Caco-2 (cell line): ENCODE measurements at regions of chr1 and their contacts with region 1.

Region 1: GRCh38 chr1:25796811-25797458 is 3.1 kb upstream of the SELENON start:
- DNase-seq: peak; percentile 79 to 83
- H3K4me3 ChIP-seq: no peak overlapping the region
- H3K4me3 Mint-ChIP-seq: no peak overlapping the region
- H3K27ac Mint-ChIP-seq: peak overlapping the region; percentile 0
- H3K4me1 ChIP-seq: peaks cover 34% of the 10 kb centered on the region
- H3K4me1 Mint-ChIP-seq: peaks cover 27% of the 10 kb centered on the region
- H3K27me3 ChIP-seq: no peaks in the 10 kb centered on the region
- H3K27me3 Mint-ChIP-seq: no peaks in the 10 kb centered on the region
- CTCF ChIP-seq: peak; percentile 64 to 78

Region 2: DNA sequence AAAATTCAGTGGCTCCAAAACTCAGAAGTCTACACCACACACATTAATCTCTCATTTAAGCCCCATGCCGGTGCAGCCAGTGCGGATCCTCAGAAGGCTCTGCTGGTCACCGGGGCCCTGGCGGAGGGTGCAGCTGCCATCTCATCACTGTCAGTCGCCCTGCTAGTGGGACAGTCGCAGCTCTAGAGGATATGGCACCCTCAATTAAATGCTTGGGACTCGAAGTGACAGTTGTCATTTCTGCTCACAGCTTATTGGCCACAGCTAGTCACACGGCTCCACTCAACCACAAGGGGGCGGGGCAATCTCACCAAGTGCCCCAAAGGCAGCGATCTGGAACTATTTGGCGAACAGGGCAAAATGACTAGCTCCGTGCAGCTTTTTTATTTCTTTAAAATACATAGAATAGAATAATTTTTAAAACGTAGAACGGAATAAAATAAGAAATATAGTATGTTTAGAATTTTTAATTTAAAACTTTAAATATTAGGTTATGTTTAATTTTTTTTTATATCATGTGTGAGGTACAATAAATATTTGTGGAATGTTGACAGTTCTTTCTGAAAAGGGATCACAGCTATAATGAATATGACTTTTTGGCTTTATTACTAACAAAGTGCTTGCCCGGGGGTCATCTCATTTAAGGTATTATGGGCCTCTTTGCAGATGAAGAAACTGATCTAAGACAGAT is 188.3 kb before region 1 on chr1:
- CTCF ChIA-PET with region 1: interaction called, 5 read pairs
- POLR2A ChIA-PET with region 1: no interaction called
- intact Hi-C with region 1: loop called (anchors 1 kb)
- DNase-seq: peak; percentile 80 to 84
- H3K4me3 ChIP-seq: no peak overlapping the region; the same call in 1 of the 2 replicates
- H3K4me3 Mint-ChIP-seq: peak overlapping the region; percentile 19
- H3K27ac Mint-ChIP-seq: no peak overlapping the region
- H3K4me1 ChIP-seq: peaks cover 8% of the 10 kb centered on the region; the same call in 1 of the 2 replicates
- H3K4me1 Mint-ChIP-seq: peaks cover 7% of the 10 kb centered on the region
- H3K27me3 ChIP-seq: no peaks in the 10 kb centered on the region
- H3K27me3 Mint-ChIP-seq: peaks cover 3% of the 10 kb centered on the region
- CTCF ChIP-seq: peak; percentile 50 to 58

Region 3: DNA sequence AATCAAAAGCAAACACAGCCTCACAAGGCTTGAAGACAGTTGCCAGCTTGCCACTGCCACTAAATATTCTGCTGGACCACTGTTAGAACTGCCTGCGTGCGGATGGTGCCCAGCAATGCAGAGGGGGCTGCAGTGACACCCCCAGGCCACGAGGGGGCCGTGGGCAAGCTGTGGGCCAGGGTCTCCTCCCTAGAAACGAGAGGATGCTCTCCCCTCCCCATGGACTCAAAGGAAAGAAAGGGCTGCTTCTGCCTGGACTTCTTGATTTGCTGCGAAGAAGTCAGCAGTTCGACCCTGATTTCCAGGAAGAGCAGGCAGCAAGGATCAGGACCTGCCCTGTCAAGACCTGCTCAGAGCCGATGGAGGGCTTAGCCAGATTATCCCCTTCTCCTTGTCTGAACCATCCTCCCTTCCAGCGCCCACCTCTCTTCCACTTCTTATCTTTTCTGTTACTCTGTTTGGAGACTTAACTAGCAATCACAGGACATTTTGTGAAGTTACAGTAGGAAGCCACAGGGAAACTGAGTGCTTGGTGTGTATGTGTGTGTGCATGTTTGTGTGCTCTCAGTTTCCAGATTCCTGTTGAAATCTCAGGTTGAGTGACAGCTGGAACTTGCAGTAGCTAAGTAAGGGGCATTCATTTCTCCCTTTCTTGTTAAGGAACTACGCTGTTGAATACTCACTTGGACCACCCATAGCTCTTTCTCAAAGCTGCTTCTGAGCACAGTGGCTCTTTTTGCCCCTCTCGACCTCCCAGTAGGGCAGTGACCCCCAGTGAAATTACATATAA is 177.6 kb before region 1 on chr1:
- CTCF ChIA-PET with region 1: interaction called, 3 read pairs
- POLR2A ChIA-PET with region 1: no interaction called
- intact Hi-C with region 1: loop called (anchors 1 kb)
- DNase-seq: peak; percentile 49 to 73
- H3K4me3 ChIP-seq: no peak overlapping the region
- H3K4me3 Mint-ChIP-seq: peak overlapping the region; percentile 66
- H3K27ac Mint-ChIP-seq: no peak overlapping the region
- H3K4me1 ChIP-seq: peaks cover 4% of the 10 kb centered on the region; the same call in 1 of the 2 replicates
- H3K4me1 Mint-ChIP-seq: peaks cover under 1% of the 10 kb centered on the region
- H3K27me3 ChIP-seq: 0 out of 2 replicates have a peak, but pooled peaks cover 1% of the 10 kb centered on the region
- H3K27me3 Mint-ChIP-seq: no peaks in the 10 kb centered on the region
- CTCF ChIP-seq: peak; percentile 84 to 87

Region 4: DNA sequence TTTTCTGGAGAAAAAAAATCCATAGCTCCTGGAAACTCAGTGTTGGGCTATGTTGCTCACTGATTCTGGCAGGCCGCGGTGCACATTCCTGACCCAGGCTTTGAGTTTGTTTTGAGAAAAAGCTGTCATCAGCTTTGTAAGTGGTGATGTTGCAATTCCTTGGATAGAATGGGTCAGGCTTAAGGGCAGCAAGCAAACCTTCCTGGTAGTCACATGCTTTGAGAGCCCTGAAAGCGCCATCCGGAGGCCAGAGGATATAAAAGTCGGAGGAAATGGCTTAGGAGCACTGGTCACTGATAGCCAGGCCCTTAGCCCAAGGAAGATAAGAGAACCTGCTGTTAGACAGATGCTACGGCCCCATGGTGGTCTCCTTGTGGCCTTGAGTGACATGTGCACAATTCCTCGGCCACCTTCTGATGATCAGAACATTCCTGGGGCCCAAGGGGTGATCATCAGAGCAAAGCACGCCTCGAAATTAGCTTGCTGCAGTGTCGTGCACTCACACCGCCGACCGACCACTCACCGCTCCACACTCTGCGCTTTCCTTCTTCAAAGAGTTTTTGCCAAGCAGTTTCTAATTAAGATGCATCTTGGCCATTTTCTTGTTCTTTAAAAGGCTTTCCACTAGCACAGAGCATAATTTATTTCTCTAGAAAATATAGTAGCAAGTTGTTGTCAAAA is 101.7 kb before region 1 on chr1:
- CTCF ChIA-PET with region 1: interaction called, 3 read pairs
- POLR2A ChIA-PET with region 1: no interaction called
- intact Hi-C with region 1: loop called (anchors 2 kb)
- DNase-seq: peak; percentile 78 to 84
- H3K4me3 ChIP-seq: no peak overlapping the region
- H3K4me3 Mint-ChIP-seq: no peak overlapping the region
- H3K27ac Mint-ChIP-seq: peak overlapping the region; percentile 74
- H3K4me1 ChIP-seq: no peaks in the 10 kb centered on the region
- H3K4me1 Mint-ChIP-seq: peaks cover 7% of the 10 kb centered on the region
- H3K27me3 ChIP-seq: no peaks in the 10 kb centered on the region
- H3K27me3 Mint-ChIP-seq: no peaks in the 10 kb centered on the region
- CTCF ChIP-seq: peak in 1 of 2 experiments; percentile 55

Region 5: DNA sequence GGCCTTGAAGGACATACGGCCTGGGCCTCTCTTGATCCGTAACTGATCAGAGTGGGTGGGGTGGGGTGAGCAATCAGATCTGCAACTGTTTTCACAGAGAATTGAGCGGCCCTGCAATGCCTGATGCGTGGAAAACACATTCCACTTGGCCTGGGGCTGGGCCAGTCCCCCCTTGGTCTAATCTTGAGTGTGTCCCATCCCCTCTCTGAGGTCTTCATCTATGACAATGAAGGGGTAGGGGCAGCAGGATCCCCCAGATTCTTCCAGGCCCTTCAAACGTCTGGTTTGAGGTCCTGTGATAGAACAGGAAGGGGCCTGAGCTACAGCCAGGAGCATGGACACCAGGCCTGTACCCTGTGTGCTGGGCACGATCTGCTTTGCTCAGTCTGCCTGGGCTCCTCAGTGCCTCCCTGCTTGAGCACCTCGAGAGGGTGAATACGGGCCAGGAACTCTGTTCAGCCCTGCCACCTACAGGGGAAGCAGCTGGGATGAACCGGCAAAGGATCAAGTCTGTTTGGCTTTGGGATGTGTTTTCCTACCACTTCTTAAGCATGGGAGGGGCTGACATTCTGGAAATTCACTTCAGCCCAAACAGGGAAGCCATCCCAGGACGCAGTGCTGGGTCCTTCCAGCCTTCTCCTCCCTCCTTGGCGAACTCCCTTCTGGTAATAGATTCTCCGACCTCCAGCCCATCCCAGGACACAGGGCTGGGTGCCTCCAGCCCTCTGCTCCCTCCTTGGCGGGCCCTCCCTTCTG is 52.9 kb before region 1 on chr1:
- CTCF ChIA-PET with region 1: no interaction called
- POLR2A ChIA-PET with region 1: no interaction called
- intact Hi-C with region 1: loop called (anchors 5 kb)
- DNase-seq: peak; percentile 45 to 47
- H3K4me3 ChIP-seq: no peak overlapping the region
- H3K4me3 Mint-ChIP-seq: no peak overlapping the region
- H3K27ac Mint-ChIP-seq: no peak overlapping the region
- H3K4me1 ChIP-seq: no peaks in the 10 kb centered on the region
- H3K4me1 Mint-ChIP-seq: no peaks in the 10 kb centered on the region
- H3K27me3 ChIP-seq: no peaks in the 10 kb centered on the region
- H3K27me3 Mint-ChIP-seq: no peaks in the 10 kb centered on the region
- CTCF ChIP-seq: peak in 1 of 2 experiments; percentile 43

Region 6: DNA sequence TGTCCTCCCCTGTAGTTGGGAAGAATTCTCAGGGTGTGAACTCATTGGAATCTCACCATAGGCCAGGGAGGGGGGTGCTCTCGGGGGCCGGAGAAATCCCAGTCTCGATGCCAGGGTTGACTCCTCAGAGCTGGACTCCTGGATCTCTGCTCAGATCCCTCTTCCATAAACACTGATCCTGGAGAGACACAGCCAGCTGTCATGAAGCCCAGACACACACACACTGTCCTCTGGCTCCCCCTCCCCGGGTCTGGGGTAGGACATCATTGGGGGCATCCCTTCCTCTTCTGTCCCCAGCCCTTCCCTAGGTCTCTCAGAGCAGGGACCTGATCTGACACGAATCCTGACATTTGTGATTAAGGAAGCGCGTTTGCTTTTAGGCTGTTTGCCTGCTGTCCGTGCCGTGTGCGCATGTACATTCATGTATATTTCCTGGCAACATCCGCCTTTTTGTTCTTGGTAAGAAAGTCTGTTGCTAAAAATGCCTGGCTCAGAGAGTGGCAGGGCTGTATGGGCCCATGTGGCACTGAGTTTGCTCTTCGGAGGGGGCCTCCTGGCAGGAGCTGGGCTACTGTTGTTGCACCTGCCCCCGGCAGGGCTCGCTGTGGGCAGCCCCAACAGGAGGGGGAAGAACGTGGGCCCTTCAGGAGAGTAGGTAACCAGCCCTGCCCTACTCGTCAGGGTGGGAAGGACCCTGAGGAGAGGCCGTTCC is 42.3 kb before region 1 on chr1:
- CTCF ChIA-PET with region 1: interaction called, 6 read pairs
- POLR2A ChIA-PET with region 1: no interaction called
- intact Hi-C with region 1: loop called (anchors 5 kb)
- DNase-seq: no peak
- H3K4me3 ChIP-seq: no peak overlapping the region
- H3K4me3 Mint-ChIP-seq: no peak overlapping the region
- H3K27ac Mint-ChIP-seq: no peak overlapping the region
- H3K4me1 ChIP-seq: no peaks in the 10 kb centered on the region
- H3K4me1 Mint-ChIP-seq: no peaks in the 10 kb centered on the region
- H3K27me3 ChIP-seq: no peaks in the 10 kb centered on the region
- H3K27me3 Mint-ChIP-seq: no peaks in the 10 kb centered on the region
- CTCF ChIP-seq: no peak

Region 7: DNA sequence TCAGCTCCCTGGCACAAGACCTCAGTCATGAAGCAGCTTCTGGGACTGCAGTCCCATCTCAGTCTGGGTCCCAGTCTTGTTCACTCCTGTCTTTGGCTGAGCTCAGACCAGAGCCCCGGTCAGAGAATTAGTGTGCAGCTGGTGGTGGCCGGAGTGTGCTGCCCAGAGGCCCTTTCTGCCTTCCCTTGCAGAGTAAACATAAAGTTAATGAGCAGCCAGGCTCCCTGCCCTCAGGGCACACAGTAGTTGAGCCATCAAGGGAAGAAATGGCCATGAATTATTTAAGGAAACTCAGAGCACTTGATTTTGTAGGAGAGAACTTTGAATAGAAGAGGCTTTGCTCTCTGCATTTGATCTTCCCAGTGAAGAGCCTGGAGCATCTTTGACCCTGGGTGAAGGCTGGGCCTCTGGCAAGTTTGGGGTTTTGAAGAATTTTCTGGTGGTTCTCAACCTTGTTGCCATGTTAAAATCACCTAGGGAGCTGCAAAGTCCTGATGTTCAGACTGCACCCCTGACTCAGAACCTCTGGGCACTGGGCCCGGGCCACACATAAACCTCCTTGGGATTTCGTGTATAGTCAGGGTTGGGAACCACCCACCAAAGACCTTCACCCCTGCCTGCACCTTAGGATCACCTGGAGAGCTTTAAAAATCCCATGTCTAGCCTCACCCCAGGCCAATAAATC is 23.4 kb before region 1 on chr1:
- CTCF ChIA-PET with region 1: interaction called, 3 read pairs
- POLR2A ChIA-PET with region 1: interaction called, 3 read pairs
- intact Hi-C with region 1: loop called (anchors 1 kb)
- DNase-seq: peak; percentile 87 to 90
- H3K4me3 ChIP-seq: no peak overlapping the region
- H3K4me3 Mint-ChIP-seq: peak overlapping the region; percentile 41
- H3K27ac Mint-ChIP-seq: peak overlapping the region; percentile 73
- H3K4me1 ChIP-seq: peaks cover 57% of the 10 kb centered on the region
- H3K4me1 Mint-ChIP-seq: peaks cover 48% of the 10 kb centered on the region
- H3K27me3 ChIP-seq: no peaks in the 10 kb centered on the region
- H3K27me3 Mint-ChIP-seq: no peaks in the 10 kb centered on the region
- CTCF ChIP-seq: no peak

Region 8: DNA sequence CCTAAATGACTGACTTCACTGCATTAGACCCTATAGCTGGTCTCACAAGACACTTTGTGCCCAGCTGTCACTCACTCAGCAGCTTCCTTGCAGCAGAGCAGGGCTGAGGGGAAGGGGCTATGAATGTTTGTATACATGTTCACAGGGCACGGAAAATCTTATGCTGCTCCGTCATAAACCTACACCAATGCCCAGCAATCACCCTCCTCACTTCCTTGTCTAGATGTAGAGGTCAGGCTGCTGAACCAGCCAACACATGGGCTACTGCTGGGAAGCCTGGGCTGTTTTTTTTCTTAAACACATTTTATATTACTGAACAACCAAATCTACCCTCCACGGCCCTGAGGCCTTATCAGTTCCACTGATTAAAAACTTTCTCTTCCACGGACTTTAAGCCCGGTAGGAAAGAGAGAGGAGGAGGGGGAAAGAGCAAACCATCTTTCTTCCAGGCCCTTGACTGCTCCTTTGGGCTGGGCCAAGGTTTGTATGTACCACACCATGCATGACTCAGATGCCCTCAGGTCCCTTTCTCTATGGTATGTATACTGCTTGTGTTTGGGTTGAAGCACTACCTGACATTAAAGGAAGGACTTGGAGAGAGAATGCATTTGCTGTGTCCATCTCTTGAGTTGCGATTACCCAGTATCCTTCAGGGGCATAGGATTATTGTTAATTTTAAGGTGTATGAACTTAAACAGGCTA is 35.6 kb after region 1 on chr1:
- CTCF ChIA-PET with region 1: no interaction called
- POLR2A ChIA-PET with region 1: no interaction called
- intact Hi-C with region 1: no loop called
- DNase-seq: no peak
- H3K4me3 ChIP-seq: no peak overlapping the region
- H3K4me3 Mint-ChIP-seq: no peak overlapping the region
- H3K27ac Mint-ChIP-seq: no peak overlapping the region
- H3K4me1 ChIP-seq: no peaks in the 10 kb centered on the region
- H3K4me1 Mint-ChIP-seq: peaks cover 5% of the 10 kb centered on the region
- H3K27me3 ChIP-seq: no peaks in the 10 kb centered on the region
- H3K27me3 Mint-ChIP-seq: no peaks in the 10 kb centered on the region
- CTCF ChIP-seq: no peak